ENCODE measurements at regions of chr6 and their contacts with region 1.

Region 1: DNA sequence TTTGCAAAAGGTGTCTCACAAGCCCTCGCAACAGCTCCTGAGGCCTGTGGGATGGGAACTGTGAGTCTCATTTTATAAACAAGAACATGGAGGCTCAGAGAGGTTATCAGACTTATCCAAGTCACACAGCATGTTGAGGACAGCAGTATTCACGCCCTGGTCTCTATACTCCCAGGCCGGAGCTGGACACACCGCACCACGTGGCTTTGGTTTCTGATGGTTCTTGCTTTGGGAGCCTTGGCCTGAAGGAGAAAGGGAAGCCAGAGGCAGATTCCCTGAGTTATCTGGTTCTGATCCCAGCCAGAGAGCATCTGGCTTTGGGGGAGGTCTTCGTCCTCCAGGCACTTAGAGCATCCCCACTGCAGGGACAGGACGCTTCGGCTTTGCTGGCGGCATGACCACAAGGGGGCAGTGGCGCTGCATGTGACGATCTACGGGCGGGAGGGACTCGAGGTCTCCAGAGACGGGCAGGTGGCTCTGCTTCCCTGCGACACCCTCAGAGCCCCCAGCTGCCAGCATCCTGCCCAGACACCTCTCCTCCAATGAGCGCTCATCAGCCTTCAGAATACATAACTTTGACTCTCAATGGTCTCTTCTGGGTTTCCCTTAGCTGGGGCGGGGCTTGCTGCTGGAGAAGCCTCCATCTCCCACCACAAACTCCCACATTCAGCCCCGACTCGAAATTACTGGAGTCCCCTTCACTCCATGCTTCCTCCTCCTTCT is 51.4 kb upstream of the SAYSD1 start:
- DNase-seq: peak; percentile 89
- H3K4me3 ChIP-seq: no peak overlapping the region; a peak in 1 of 4 replicates
- H3K27ac ChIP-seq: no peak overlapping the region
- H3K4me1 ChIP-seq: no peaks in the 10 kb centered on the region; a peak in 1 of 4 replicates
- H3K27me3 ChIP-seq: no peaks in the 10 kb centered on the region
- CTCF ChIP-seq: peak; percentile 70
- EP300 ChIP-seq: no peak
- RAD21 ChIP-seq: peak; percentile 92

Region 2: GRCh38 chr6:38997128-38997761 is 169.1 kb before region 1 on chr6:
- CTCF ChIA-PET with region 1: interaction called, 26 read pairs
- POLR2A ChIA-PET with region 1: no interaction called
- DNase-seq: peak; percentile 49
- H3K4me3 ChIP-seq: no peak overlapping the region
- H3K27ac ChIP-seq: no peak overlapping the region
- H3K4me1 ChIP-seq: no peaks in the 10 kb centered on the region
- H3K27me3 ChIP-seq: no peaks in the 10 kb centered on the region
- CTCF ChIP-seq: peak; percentile 61
- EP300 ChIP-seq: no peak
- RAD21 ChIP-seq: peak; percentile 91

Region 3: GRCh38 chr6:39062014-39062740 is 104.2 kb before region 1 on chr6:
- CTCF ChIA-PET with region 1: interaction called, 11 read pairs
- POLR2A ChIA-PET with region 1: no interaction called
- DNase-seq: peak; percentile 80
- H3K4me3 ChIP-seq: no peak overlapping the region
- H3K27ac ChIP-seq: peak overlapping the region in 1 of 2 experiments; percentile 44; a peak in 2 of 4 replicates
- H3K4me1 ChIP-seq: peaks cover 0 to 57% of the 10 kb centered on the region in 2 experiments; a peak in 2 of 4 replicates
- H3K27me3 ChIP-seq: no peaks in the 10 kb centered on the region
- CTCF ChIP-seq: no peak
- EP300 ChIP-seq: peak in 1 of 2 experiments; percentile 87; a peak in 2 of 4 replicates
- RAD21 ChIP-seq: peak; percentile 29

Region 4: GRCh38 chr6:39189915-39190544 is 23.7 kb after region 1 on chr6:
- CTCF ChIA-PET with region 1: interaction called, 17 read pairs
- POLR2A ChIA-PET with region 1: no interaction called
- DNase-seq: peak; percentile 69
- H3K4me3 ChIP-seq: no peak overlapping the region
- H3K27ac ChIP-seq: no peak overlapping the region
- H3K4me1 ChIP-seq: peaks cover 0 to 6% of the 10 kb centered on the region in 2 experiments; a peak in 1 of 4 replicates
- H3K27me3 ChIP-seq: no peaks in the 10 kb centered on the region
- CTCF ChIP-seq: no peak; the same call in 1 of the 2 replicates
- EP300 ChIP-seq: no peak
- RAD21 ChIP-seq: peak; percentile 45

Region 5: GRCh38 chr6:39218873-39219536 is 52.7 kb after region 1 on chr6:
- CTCF ChIA-PET with region 1: interaction called, 12 read pairs
- POLR2A ChIA-PET with region 1: no interaction called
- DNase-seq: no peak
- H3K4me3 ChIP-seq: no peak overlapping the region
- H3K27ac ChIP-seq: no peak overlapping the region
- H3K4me1 ChIP-seq: no peaks in the 10 kb centered on the region
- H3K27me3 ChIP-seq: no peaks in the 10 kb centered on the region
- CTCF ChIP-seq: no peak
- EP300 ChIP-seq: no peak
- RAD21 ChIP-seq: 0 out of 2 replicates have a peak, but pooled peaks have one; percentile 2

Region 6: GRCh38 chr6:39280247-39280731 is 113.9 kb after region 1 on chr6:
- CTCF ChIA-PET with region 1: interaction called, 12 read pairs
- POLR2A ChIA-PET with region 1: no interaction called
- DNase-seq: no peak
- H3K4me3 ChIP-seq: no peak overlapping the region
- H3K27ac ChIP-seq: no peak overlapping the region
- H3K4me1 ChIP-seq: no peaks in the 10 kb centered on the region
- H3K27me3 ChIP-seq: no peaks in the 10 kb centered on the region
- CTCF ChIP-seq: no peak
- EP300 ChIP-seq: no peak
- RAD21 ChIP-seq: no peak

Region 7: GRCh38 chr6:39309942-39310531 is 143.7 kb after region 1 on chr6:
- CTCF ChIA-PET with region 1: interaction called, 457 read pairs
- POLR2A ChIA-PET with region 1: no interaction called
- DNase-seq: peak; percentile 88
- H3K4me3 ChIP-seq: no peak overlapping the region; a peak in 1 of 4 replicates
- H3K27ac ChIP-seq: no peak overlapping the region
- H3K4me1 ChIP-seq: peaks cover 0 to 2% of the 10 kb centered on the region in 2 experiments; a peak in 1 of 4 replicates
- H3K27me3 ChIP-seq: peaks cover 7% of the 10 kb centered on the region; the same call in 1 of the 2 replicates
- CTCF ChIP-seq: peak; percentile 78
- EP300 ChIP-seq: no peak
- RAD21 ChIP-seq: peak; percentile 94